ENCODE measurements at regions of chr5 and their contacts with region 1.

Region 1: GRCh38 chr5:107571621-107572536 is 98.9 kb downstream of the EFNA5 start:
- DNase-seq: peak; percentile 59 to 87 (median 77)
- ATAC-seq: peak; percentile 93
- H3K4me3 ChIP-seq: peak overlapping the region; percentile 69
- H3K4me3 Mint-ChIP-seq: peak overlapping the region; percentile 77 to 90 (median 86)
- H3K27ac ChIP-seq: no peak overlapping the region
- H3K27ac Mint-ChIP-seq: peak overlapping the region in 2 of 9 donors; percentile 32 to 51
- H3K4me1 ChIP-seq: peaks cover 6 to 8% of the 10 kb centered on the region in 2 donors
- H3K4me1 Mint-ChIP-seq: peaks cover 6 to 23% (median 17%) of the 10 kb centered on the region in 7 donors
- H3K27me3 ChIP-seq: no peaks in the 10 kb centered on the region
- H3K27me3 Mint-ChIP-seq: peaks cover 8 to 45% (median 9%) of the 10 kb centered on the region in 5 donors

Region 2: GRCh38 chr5:107129051-107129450 is 442.8 kb before region 1 on chr5:
- CTCF ChIA-PET with region 1: no interaction called
- POLR2A ChIA-PET with region 1: no interaction called
- intact Hi-C with region 1: no loop called
- DNase-seq: no peak
- ATAC-seq: no peak
- H3K4me3 ChIP-seq: no peak overlapping the region
- H3K4me3 Mint-ChIP-seq: no peak overlapping the region
- H3K27ac ChIP-seq: no peak overlapping the region
- H3K27ac Mint-ChIP-seq: no peak overlapping the region
- H3K4me1 ChIP-seq: no peaks in the 10 kb centered on the region
- H3K4me1 Mint-ChIP-seq: no peaks in the 10 kb centered on the region
- H3K27me3 ChIP-seq: no peaks in the 10 kb centered on the region
- H3K27me3 Mint-ChIP-seq: no peaks in the 10 kb centered on the region

Region 3: GRCh38 chr5:107248066-107248695 is 323.7 kb before region 1 on chr5:
- CTCF ChIA-PET with region 1: no interaction called
- POLR2A ChIA-PET with region 1: no interaction called
- intact Hi-C with region 1: loop called in 1 of 2 experiments (anchors 5 kb)
- DNase-seq: peak in 1 of 9 donors; percentile 26
- ATAC-seq: peak; percentile 57
- H3K4me3 ChIP-seq: no peak overlapping the region
- H3K4me3 Mint-ChIP-seq: no peak overlapping the region
- H3K27ac ChIP-seq: no peak overlapping the region
- H3K27ac Mint-ChIP-seq: no peak overlapping the region
- H3K4me1 ChIP-seq: no peaks in the 10 kb centered on the region
- H3K4me1 Mint-ChIP-seq: no peaks in the 10 kb centered on the region
- H3K27me3 ChIP-seq: no peaks in the 10 kb centered on the region
- H3K27me3 Mint-ChIP-seq: peaks cover 0 to 14% (median 0%) of the 10 kb centered on the region in 5 donors

Region 4: GRCh38 chr5:107263387-107264018 is 308.4 kb before region 1 on chr5:
- CTCF ChIA-PET with region 1: no interaction called
- POLR2A ChIA-PET with region 1: no interaction called
- intact Hi-C with region 1: no loop called
- DNase-seq: peak in 1 of 9 donors; percentile 11
- ATAC-seq: peak; percentile 57
- H3K4me3 ChIP-seq: no peak overlapping the region
- H3K4me3 Mint-ChIP-seq: peak overlapping the region in 2 of 10 donors; percentile 11 to 33
- H3K27ac ChIP-seq: no peak overlapping the region
- H3K27ac Mint-ChIP-seq: no peak overlapping the region
- H3K4me1 ChIP-seq: no peaks in the 10 kb centered on the region
- H3K4me1 Mint-ChIP-seq: no peaks in the 10 kb centered on the region
- H3K27me3 ChIP-seq: no peaks in the 10 kb centered on the region
- H3K27me3 Mint-ChIP-seq: peaks cover 0 to 16% (median 0%) of the 10 kb centered on the region in 5 donors

Region 5: DNA sequence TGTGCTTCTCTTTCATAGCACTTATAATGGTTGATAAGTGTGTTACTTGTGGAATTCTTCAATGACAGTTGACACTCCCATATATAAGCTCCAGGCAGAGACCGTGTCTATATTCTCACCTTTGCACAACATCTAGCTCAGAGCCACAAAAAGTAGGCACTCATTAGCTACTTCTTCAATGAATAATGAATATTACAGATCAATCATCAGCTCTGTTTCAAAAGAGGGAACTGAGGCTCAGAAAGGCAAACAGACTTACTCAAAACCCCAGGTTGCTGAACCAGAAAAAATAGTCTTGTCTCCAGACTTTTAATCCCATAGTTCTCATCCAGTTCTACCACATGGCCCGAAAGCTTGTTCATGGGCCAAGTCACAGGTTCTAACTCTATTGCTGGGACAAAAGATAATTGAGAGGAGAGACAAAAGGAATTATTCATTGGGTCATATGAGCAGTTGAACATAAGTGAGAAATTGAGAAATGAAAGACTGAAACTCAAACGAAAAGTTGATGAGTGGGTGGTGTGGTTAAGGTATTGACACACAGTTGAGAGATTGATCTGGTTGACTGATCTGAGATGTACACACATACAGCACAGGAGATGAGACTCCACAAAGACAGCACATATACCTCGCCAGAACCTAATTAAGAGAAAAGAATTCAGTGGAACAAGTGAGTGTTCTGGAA is 282.7 kb before region 1 on chr5:
- CTCF ChIA-PET with region 1: no interaction called
- POLR2A ChIA-PET with region 1: no interaction called
- intact Hi-C with region 1: loop called in 1 of 2 experiments (anchors 5 kb)
- DNase-seq: no peak
- ATAC-seq: no peak
- H3K4me3 ChIP-seq: no peak overlapping the region
- H3K4me3 Mint-ChIP-seq: no peak overlapping the region
- H3K27ac ChIP-seq: no peak overlapping the region
- H3K27ac Mint-ChIP-seq: no peak overlapping the region
- H3K4me1 ChIP-seq: no peaks in the 10 kb centered on the region
- H3K4me1 Mint-ChIP-seq: peaks cover 0 to 13% (median 0%) of the 10 kb centered on the region in 7 donors
- H3K27me3 ChIP-seq: no peaks in the 10 kb centered on the region
- H3K27me3 Mint-ChIP-seq: peaks cover 0 to 7% (median 2%) of the 10 kb centered on the region in 5 donors

Region 6: DNA sequence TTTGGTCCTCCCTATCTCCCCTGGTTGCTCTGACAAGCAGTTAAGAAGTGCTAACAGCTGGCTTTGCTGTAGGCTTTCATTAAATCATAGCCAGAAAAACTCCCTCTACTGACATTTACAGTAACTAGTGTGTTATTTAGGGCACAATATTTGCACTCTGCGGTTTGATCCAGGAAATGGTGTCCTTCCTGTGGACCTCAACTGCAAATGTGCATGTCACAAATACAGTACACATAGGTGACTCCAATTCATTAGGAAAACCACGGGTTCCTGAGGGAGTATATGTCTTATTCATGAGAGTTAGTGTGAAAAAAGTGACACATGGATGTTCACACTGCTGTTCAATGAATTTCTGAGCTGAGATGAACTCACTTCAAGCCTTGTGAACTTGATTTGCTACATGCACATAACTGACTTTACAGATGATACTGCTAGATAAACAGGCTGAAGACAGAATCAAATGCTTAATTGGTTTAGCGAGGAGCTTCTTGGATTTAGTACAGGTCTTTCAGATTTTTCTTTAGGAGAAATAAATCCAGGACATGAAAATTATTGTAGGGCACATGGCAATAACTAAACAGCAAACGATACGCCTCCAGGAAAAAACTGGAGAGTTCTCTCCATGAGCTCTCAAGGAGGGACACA is 182.6 kb before region 1 on chr5:
- CTCF ChIA-PET with region 1: no interaction called
- POLR2A ChIA-PET with region 1: no interaction called
- intact Hi-C with region 1: loop called in 1 of 2 experiments (anchors 2 kb)
- DNase-seq: peak in 2 of 9 donors; percentile 3 to 22
- ATAC-seq: peak; percentile 69
- H3K4me3 ChIP-seq: no peak overlapping the region
- H3K4me3 Mint-ChIP-seq: peak overlapping the region in 4 of 10 donors; percentile 2 to 74 (median 12)
- H3K27ac ChIP-seq: no peak overlapping the region
- H3K27ac Mint-ChIP-seq: peak overlapping the region in 1 of 9 donors; percentile 31
- H3K4me1 ChIP-seq: peaks cover 0 to 19% of the 10 kb centered on the region in 2 donors
- H3K4me1 Mint-ChIP-seq: peaks cover 19 to 28% (median 21%) of the 10 kb centered on the region in 7 donors
- H3K27me3 ChIP-seq: no peaks in the 10 kb centered on the region
- H3K27me3 Mint-ChIP-seq: peaks cover 0 to 4% (median 0%) of the 10 kb centered on the region in 5 donors

Region 7: DNA sequence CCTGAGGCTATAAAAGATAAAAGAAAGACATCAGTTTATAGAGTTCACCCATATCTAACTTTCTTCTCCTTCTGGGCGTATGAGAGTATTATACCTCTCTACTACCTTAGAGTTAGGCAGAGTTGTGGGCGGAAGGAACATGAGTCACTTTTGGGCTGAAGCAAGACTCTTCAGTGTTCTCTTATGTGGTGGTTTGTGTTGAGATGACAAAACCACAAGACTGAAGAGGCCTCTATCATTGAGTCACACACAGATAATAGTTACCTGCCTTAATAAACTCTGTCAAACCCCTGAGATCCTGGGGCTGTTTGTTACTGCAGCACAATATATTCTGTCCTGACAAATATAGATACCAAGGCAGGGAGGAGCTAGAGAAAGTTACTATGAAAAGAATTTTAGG is 85.4 kb before region 1 on chr5:
- CTCF ChIA-PET with region 1: no interaction called
- POLR2A ChIA-PET with region 1: no interaction called
- intact Hi-C with region 1: loop called in 1 of 2 experiments (anchors 5 kb)
- DNase-seq: peak in 1 of 9 donors; percentile 38
- ATAC-seq: peak; percentile 86
- H3K4me3 ChIP-seq: no peak overlapping the region
- H3K4me3 Mint-ChIP-seq: no peak overlapping the region
- H3K27ac ChIP-seq: no peak overlapping the region
- H3K27ac Mint-ChIP-seq: no peak overlapping the region
- H3K4me1 ChIP-seq: peaks cover 0 to 20% of the 10 kb centered on the region in 2 donors
- H3K4me1 Mint-ChIP-seq: peaks cover 0 to 17% (median 0%) of the 10 kb centered on the region in 7 donors
- H3K27me3 ChIP-seq: no peaks in the 10 kb centered on the region
- H3K27me3 Mint-ChIP-seq: peaks cover 0 to 17% (median 0%) of the 10 kb centered on the region in 5 donors

Region 8: DNA sequence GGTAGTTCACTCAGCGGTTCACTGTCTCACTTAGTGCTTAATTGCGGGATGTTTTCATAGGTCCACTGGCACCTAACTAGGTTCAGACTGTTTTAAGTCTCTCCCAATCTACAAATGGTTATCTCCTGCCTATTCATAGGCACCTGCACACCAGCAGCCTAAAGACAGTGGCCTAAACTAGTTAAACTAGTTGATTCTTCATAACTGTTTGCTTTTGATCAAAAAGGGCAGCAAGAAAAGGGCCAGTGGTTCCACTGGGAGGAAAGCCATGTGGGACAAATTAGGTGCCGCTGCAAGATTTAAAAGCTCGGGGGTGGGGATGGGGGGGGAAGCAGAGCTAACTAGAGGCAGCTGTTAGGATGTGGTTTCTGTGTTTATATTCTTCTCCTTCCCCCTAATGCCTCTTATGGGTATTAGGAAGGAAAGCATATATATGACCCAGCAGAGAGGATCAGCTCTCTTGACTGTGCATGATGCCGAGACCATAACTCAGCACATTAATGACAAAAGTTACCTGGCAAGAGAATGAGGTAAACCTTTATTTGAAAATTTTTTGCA is 33.0 kb after region 1 on chr5:
- CTCF ChIA-PET with region 1: no interaction called
- POLR2A ChIA-PET with region 1: no interaction called
- intact Hi-C with region 1: no loop called
- DNase-seq: no peak
- ATAC-seq: no peak
- H3K4me3 ChIP-seq: no peak overlapping the region
- H3K4me3 Mint-ChIP-seq: no peak overlapping the region
- H3K27ac ChIP-seq: no peak overlapping the region
- H3K27ac Mint-ChIP-seq: no peak overlapping the region
- H3K4me1 ChIP-seq: no peaks in the 10 kb centered on the region
- H3K4me1 Mint-ChIP-seq: no peaks in the 10 kb centered on the region
- H3K27me3 ChIP-seq: no peaks in the 10 kb centered on the region
- H3K27me3 Mint-ChIP-seq: peaks cover 4 to 49% (median 21%) of the 10 kb centered on the region in 5 donors

Region 9: DNA sequence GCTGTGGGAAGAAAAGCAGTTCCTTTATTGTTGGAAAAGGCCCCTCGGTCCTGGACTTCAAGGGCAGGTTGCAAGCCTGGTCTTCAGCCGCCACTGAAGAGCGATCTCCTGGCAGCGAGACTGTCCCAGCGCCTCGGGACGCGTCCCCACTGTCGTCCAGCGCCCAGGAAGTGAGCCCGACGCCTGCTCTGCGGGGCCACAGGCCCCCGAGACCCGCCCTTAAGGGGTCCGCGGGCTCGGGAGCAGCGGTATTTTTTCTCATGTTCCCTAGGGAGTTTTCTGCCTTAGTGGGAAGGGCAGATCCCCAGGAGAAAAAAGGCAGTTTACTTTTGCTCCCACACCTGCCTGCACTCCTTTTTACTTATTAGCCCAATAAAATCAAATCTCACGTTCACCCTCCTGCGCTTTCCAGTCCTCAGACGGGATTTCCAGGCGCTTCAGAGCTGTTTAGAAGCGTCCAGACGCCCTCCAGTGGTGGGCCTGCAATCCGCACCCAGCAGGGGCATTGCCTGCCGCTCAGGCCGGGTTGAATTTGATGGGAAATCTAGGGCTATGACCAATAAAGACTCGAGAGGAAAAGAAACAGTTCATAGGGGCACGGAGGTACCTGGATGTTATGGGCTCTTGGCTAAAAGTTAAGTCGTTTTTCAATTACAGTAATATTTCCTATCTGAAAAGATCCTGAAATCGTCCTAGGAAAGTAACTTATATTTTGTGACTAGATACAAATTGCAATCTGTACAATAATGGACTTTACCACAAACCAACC is 101.7 kb after region 1 on chr5:
- CTCF ChIA-PET with region 1: no interaction called
- POLR2A ChIA-PET with region 1: no interaction called
- intact Hi-C with region 1: loop called (anchors 1 kb)
- DNase-seq: peak; percentile 22 to 73 (median 43)
- ATAC-seq: peak; percentile 82
- H3K4me3 ChIP-seq: peak overlapping the region; percentile 60
- H3K4me3 Mint-ChIP-seq: peak overlapping the region; percentile 71 to 94 (median 86)
- H3K27ac ChIP-seq: no peak overlapping the region
- H3K27ac Mint-ChIP-seq: no peak overlapping the region
- H3K4me1 ChIP-seq: peaks cover 11 to 19% of the 10 kb centered on the region in 2 donors
- H3K4me1 Mint-ChIP-seq: peaks cover 14 to 36% (median 28%) of the 10 kb centered on the region in 7 donors
- H3K27me3 ChIP-seq: peaks cover 5 to 10% of the 10 kb centered on the region in 2 donors
- H3K27me3 Mint-ChIP-seq: peaks cover 62 to 75% (median 67%) of the 10 kb centered on the region in 5 donors

Region 10: DNA sequence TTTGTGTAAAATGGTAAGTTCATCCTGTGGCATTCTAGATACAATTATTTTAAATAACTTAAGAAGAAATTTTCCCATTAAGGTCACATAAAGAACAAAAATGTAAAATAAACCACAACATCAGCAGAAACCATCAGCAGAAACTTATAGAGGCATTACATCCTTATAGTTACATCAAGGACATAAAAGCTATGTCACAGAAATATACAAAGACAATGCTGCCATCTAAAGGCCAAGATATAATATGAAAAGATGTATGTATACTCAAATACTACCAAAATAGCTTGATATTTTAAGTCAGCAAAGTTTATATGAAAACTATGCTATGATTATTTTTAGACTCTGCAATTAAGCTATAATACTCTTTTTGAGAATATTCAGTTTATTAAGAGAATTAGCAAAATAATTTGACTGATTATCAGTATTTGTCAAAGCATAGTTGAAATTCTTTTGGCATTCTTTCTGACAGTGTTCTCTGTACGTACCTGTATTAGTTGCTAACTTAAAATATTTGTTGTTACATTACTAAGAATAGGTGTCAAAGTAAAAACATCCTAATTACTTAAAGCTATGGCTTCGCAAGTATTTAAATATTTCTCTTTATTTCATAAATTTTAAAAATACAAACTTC is 773.8 kb after region 1 on chr5:
- CTCF ChIA-PET with region 1: no interaction called
- POLR2A ChIA-PET with region 1: no interaction called
- intact Hi-C with region 1: loop called in 1 of 2 experiments (anchors 2 kb)
- DNase-seq: peak in 6 of 9 donors; percentile 10 to 53 (median 38)
- ATAC-seq: peak; percentile 72
- H3K4me3 ChIP-seq: no peak overlapping the region
- H3K4me3 Mint-ChIP-seq: no peak overlapping the region
- H3K27ac ChIP-seq: no peak overlapping the region
- H3K27ac Mint-ChIP-seq: no peak overlapping the region
- H3K4me1 ChIP-seq: no peaks in the 10 kb centered on the region
- H3K4me1 Mint-ChIP-seq: peaks cover 0 to 11% (median 0%) of the 10 kb centered on the region in 7 donors
- H3K27me3 ChIP-seq: no peaks in the 10 kb centered on the region
- H3K27me3 Mint-ChIP-seq: no peaks in the 10 kb centered on the region